ENCODE measurements at regions of chr5 and their contacts with region 1.

Region 1: DNA sequence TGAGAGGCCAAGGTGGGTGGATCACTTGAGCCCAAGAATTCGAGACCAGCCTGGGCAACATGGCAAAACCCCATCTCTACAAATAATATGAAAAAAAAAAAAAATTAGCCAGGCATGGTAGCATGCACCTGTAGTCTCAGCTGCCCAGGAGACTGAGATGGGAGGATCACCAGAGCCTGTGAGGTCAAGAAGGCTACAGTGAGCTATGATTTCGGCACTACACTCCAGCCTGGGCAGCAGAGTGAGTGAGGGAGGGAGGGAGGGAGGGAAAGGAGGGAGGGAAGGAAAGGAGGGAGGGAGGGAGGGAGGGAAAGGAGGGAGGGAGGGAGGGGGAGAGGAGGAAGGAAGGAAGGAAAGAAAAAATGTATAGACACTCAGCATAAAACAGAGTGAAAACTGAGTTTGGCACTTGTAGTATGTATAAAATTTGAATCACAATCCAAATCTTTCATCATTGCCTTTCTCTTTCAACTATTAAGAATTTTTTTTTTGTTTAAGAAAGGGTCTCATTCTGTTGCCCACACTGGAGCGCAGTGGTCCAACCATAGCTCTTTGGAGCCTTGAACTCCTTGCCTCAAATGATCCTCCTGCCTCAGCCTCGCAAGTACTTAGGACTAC is 27.8 kb downstream of the SERINC5 start:
- DNase-seq: no peak
- H3K4me3 ChIP-seq: peak overlapping the region; percentile 14
- H3K27ac ChIP-seq: peak overlapping the region; percentile 8
- H3K4me1 ChIP-seq: peaks cover 46% of the 10 kb centered on the region
- CTCF ChIP-seq: no peak

Region 2: GRCh38 chr5:80211327-80211726 is 16.8 kb before region 1 on chr5:
- CTCF ChIA-PET with region 1: no interaction called
- POLR2A ChIA-PET with region 1: no interaction called
- intact Hi-C with region 1: no loop called
- DNase-seq: no peak
- H3K4me3 ChIP-seq: no peak overlapping the region
- H3K27ac ChIP-seq: no peak overlapping the region
- H3K4me1 ChIP-seq: peaks cover 21% of the 10 kb centered on the region
- CTCF ChIP-seq: no peak

Region 3: GRCh38 chr5:80238778-80239679 is 10.9 kb after region 1 on chr5:
- CTCF ChIA-PET with region 1: no interaction called
- POLR2A ChIA-PET with region 1: interaction called, 12 read pairs
- intact Hi-C with region 1: no loop called
- DNase-seq: no peak
- H3K4me3 ChIP-seq: peak overlapping the region; percentile 40
- H3K27ac ChIP-seq: peak overlapping the region; percentile 35
- H3K4me1 ChIP-seq: peaks cover 48% of the 10 kb centered on the region
- CTCF ChIP-seq: no peak

Measured in OCI-LY7 (cell line).